ENCODE measurements at regions of chr6 and their contacts with region 1.

Region 1: DNA sequence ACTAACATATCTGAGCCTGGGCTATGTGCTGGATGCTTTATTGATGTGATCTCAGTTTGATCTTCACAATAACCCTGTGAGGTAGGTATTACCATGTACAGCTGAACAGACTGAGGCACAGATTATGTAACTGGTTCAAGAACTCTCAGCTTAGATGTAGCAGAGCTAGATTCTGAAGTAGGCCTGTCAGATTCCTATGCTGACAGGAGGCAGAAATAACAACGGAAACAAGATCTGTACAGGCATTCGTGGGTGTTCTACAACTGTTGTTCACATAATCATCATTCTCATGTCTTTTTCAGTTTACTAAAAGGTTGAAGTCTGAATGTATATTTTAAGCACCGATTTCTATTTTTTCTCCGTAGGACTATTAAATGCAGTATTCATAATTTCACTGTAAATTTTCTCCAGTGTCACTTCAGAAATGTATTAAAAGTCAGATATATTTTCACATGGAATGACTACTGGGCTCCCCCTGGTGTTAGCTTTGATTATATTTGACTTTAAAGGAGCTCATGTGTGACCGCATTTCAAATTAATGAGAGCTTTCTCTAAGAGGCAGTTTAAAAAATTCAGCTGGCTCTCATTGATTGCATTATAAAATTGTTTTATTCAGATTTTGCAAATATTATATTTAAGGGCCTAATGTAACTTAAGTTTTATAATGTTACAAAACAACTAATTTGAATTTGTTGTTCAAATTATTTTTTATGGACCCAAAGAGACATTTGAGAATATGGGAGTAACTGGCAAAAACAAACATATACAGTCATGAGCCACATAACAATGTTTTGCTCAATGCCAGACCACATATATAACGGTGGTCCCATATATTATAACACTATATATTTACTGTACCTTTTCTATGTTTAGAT is 36.4 kb upstream of the SLC17A4 start:
- H3K4me3 ChIP-seq: no peak overlapping the region
- H3K27ac ChIP-seq: no peak overlapping the region
- H3K4me1 ChIP-seq: no peaks in the 10 kb centered on the region
- CTCF ChIP-seq: no peak

Region 2: DNA sequence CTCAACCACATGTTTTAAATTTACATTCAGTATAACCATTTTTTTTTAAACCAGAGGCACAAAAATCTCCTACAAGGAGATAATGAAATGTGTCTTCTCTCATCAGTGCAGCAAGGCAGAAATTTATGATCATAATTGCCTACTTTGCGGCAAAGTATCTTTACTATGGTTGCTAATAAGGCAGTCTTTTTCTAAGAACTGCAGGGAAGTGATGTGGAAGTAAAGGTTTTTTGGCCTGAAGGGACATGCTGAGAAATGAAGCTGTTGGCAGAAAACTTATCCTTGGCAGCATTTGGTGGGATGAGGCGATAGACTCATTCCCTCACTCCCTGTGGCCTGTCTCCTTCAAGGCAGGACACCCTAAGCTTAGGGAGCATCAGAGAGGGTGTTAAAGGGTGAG is 17.3 kb before region 1 on chr6:
- CTCF ChIA-PET with region 1: interaction called, 13 read pairs
- POLR2A ChIA-PET with region 1: interaction called, 7 read pairs
- H3K4me3 ChIP-seq: no peak overlapping the region
- H3K27ac ChIP-seq: no peak overlapping the region
- H3K4me1 ChIP-seq: no peaks in the 10 kb centered on the region
- CTCF ChIP-seq: no peak

Region 3: DNA sequence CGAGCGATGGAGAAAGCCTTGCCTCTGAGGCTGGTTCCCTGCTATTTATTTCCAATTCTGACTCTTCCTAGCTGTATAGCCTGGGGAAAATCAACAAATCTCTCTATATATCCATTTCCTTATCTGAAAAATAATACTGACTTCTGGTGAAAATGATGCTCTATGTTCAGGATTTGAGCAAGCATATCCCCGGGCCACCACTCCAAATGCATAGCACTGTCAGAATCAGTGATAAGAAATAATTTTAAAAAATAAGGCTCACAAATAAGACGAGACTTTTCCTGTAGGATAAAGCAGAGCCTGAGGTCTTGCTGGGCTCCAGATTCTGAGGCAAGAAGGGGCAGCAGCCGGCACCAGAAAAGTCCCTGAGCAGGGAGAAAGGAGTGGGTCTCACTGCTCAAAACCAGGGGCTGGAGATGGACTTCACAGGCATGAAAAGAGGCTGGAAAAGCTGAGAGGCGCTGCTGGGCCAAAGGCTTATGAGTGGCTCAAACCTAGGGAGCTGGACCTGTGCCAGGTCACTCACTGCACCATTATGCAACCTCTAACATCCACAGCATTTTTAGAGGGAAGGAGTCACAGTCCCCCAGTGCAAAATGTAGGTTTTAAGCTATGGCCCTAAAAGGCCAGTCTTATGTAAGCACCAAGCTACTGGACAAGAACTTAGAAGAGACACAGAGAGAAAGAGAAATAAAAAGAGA is 11.6 kb before region 1 on chr6:
- CTCF ChIA-PET with region 1: interaction called, 24 read pairs
- POLR2A ChIA-PET with region 1: interaction called, 7 read pairs
- H3K4me3 ChIP-seq: no peak overlapping the region
- H3K27ac ChIP-seq: no peak overlapping the region
- H3K4me1 ChIP-seq: no peaks in the 10 kb centered on the region
- CTCF ChIP-seq: no peak

Region 4: DNA sequence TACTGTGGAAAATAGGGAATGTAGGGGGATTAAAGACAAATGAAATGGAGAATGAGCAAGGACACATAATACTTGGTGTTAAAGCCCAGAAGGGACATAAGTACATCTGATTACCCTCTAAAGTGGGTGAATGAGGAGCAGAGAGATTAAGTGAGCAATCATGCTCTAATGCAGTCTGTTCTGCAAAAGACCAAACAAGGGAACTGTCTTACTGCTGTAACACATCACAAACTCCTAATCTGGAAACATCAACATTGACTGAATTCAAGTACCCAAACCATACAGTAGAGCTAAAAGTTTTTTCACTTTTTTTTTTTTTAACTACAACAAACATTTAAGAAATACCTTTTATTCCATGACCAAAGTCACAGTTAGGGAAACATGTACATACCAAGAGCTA is 17.2 kb after region 1 on chr6:
- CTCF ChIA-PET with region 1: interaction called, 23 read pairs
- POLR2A ChIA-PET with region 1: interaction called, 3 read pairs
- H3K4me3 ChIP-seq: no peak overlapping the region
- H3K27ac ChIP-seq: no peak overlapping the region
- H3K4me1 ChIP-seq: no peaks in the 10 kb centered on the region
- CTCF ChIP-seq: no peak

Region 5: GRCh38 chr6:25882051-25882496 is 164.0 kb after region 1 on chr6:
- CTCF ChIA-PET with region 1: interaction called, 10 read pairs
- POLR2A ChIA-PET with region 1: no interaction called
- H3K4me3 ChIP-seq: peak overlapping the region; percentile 18
- H3K27ac ChIP-seq: no peak overlapping the region
- H3K4me1 ChIP-seq: no peaks in the 10 kb centered on the region; the same call in 1 of the 2 replicates
- CTCF ChIP-seq: no peak

Region 6: GRCh38 chr6:25889877-25890853 is 172.1 kb after region 1 on chr6:
- CTCF ChIA-PET with region 1: interaction called, 29 read pairs
- POLR2A ChIA-PET with region 1: no interaction called
- H3K4me3 ChIP-seq: no peak overlapping the region
- H3K27ac ChIP-seq: no peak overlapping the region
- H3K4me1 ChIP-seq: no peaks in the 10 kb centered on the region
- CTCF ChIP-seq: no peak

Region 7: GRCh38 chr6:26003102-26003694 is 285.1 kb after region 1 on chr6:
- CTCF ChIA-PET with region 1: interaction called, 16 read pairs
- POLR2A ChIA-PET with region 1: no interaction called
- H3K4me3 ChIP-seq: no peak overlapping the region
- H3K27ac ChIP-seq: no peak overlapping the region
- H3K4me1 ChIP-seq: no peaks in the 10 kb centered on the region
- CTCF ChIP-seq: no peak